GM12878 (cell line): ENCODE measurements at regions of chr14 and their contacts with region 1.

Region 1: GRCh38 chr14:25537846-25538455 is 488.0 kb upstream of the STXBP6 start:
- DNase-seq: no peak
- ATAC-seq: peak; percentile 74
- H3K4me3 ChIP-seq: no peak overlapping the region
- H3K27ac ChIP-seq: no peak overlapping the region
- H3K4me1 ChIP-seq: no peaks in the 10 kb centered on the region
- H3K27me3 ChIP-seq: no peaks in the 10 kb centered on the region
- CTCF ChIP-seq: peak; percentile 33 to 52 (median 43); a peak in 3 of 6 replicates
- EP300 ChIP-seq: no peak
- POLR2A ChIP-seq: no peak
- RAD21 ChIP-seq: 0 out of 2 replicates have a peak, but pooled peaks have one; percentile 10

Region 2: GRCh38 chr14:25381464-25381863 is 156.5 kb before region 1 on chr14:
- CTCF ChIA-PET with region 1: interaction called, 10 read pairs
- POLR2A ChIA-PET with region 1: no interaction called
- RAD21 ChIA-PET with region 1: no interaction called
- SMC1A ChIA-PET with region 1: no interaction called
- in situ Hi-C with region 1: no loop called
- intact Hi-C with region 1: no loop called
- DNase-seq: no peak
- ATAC-seq: peak; percentile 54; the same call in 1 of the 3 replicates
- H3K4me3 ChIP-seq: no peak overlapping the region
- H3K27ac ChIP-seq: no peak overlapping the region
- H3K4me1 ChIP-seq: no peaks in the 10 kb centered on the region
- H3K27me3 ChIP-seq: no peaks in the 10 kb centered on the region
- CTCF ChIP-seq: peak; percentile 5 to 18 (median 15); a peak in 1 of 6 replicates
- EP300 ChIP-seq: no peak
- POLR2A ChIP-seq: no peak
- RAD21 ChIP-seq: no peak

Region 3: GRCh38 chr14:25431211-25432048 is 106.5 kb before region 1 on chr14:
- CTCF ChIA-PET with region 1: interaction called, 100 read pairs
- POLR2A ChIA-PET with region 1: no interaction called
- RAD21 ChIA-PET with region 1: interaction called, 26 read pairs
- SMC1A ChIA-PET with region 1: interaction called, 28 read pairs
- in situ Hi-C with region 1: no loop called
- intact Hi-C with region 1: loop called (anchors 1 kb)
- DNase-seq: no peak
- ATAC-seq: peak; percentile 52; the same call in 1 of the 3 replicates
- H3K4me3 ChIP-seq: no peak overlapping the region
- H3K27ac ChIP-seq: no peak overlapping the region
- H3K4me1 ChIP-seq: no peaks in the 10 kb centered on the region
- H3K27me3 ChIP-seq: no peaks in the 10 kb centered on the region
- CTCF ChIP-seq: peak in 1 of 3 experiments; percentile 33; a peak in 1 of 6 replicates
- EP300 ChIP-seq: no peak
- POLR2A ChIP-seq: no peak
- RAD21 ChIP-seq: no peak